ENCODE measurements at regions of chr10 and their contacts with region 1.

Region 1: GRCh38 chr10:93554760-93555432 is 11.6 kb upstream of the FFAR4 start:
- DNase-seq: peak; percentile 84
- H3K4me3 Mint-ChIP-seq: no peak overlapping the region
- H3K27ac Mint-ChIP-seq: no peak overlapping the region
- H3K4me1 Mint-ChIP-seq: peaks cover 5% of the 10 kb centered on the region
- H3K27me3 Mint-ChIP-seq: no peaks in the 10 kb centered on the region
- CTCF ChIP-seq: peak; percentile 76

Region 2: GRCh38 chr10:93180482-93180931 is 374.4 kb before region 1 on chr10:
- CTCF ChIA-PET with region 1: no interaction called
- POLR2A ChIA-PET with region 1: no interaction called
- intact Hi-C with region 1: no loop called
- DNase-seq: no peak
- H3K4me3 Mint-ChIP-seq: no peak overlapping the region
- H3K27ac Mint-ChIP-seq: no peak overlapping the region
- H3K4me1 Mint-ChIP-seq: no peaks in the 10 kb centered on the region
- H3K27me3 Mint-ChIP-seq: no peaks in the 10 kb centered on the region
- CTCF ChIP-seq: no peak

Region 3: GRCh38 chr10:93356516-93356915 is 198.4 kb before region 1 on chr10:
- CTCF ChIA-PET with region 1: no interaction called
- POLR2A ChIA-PET with region 1: no interaction called
- intact Hi-C with region 1: no loop called
- DNase-seq: no peak
- H3K4me3 Mint-ChIP-seq: no peak overlapping the region
- H3K27ac Mint-ChIP-seq: no peak overlapping the region
- H3K4me1 Mint-ChIP-seq: no peaks in the 10 kb centered on the region
- H3K27me3 Mint-ChIP-seq: no peaks in the 10 kb centered on the region
- CTCF ChIP-seq: no peak

Region 4: DNA sequence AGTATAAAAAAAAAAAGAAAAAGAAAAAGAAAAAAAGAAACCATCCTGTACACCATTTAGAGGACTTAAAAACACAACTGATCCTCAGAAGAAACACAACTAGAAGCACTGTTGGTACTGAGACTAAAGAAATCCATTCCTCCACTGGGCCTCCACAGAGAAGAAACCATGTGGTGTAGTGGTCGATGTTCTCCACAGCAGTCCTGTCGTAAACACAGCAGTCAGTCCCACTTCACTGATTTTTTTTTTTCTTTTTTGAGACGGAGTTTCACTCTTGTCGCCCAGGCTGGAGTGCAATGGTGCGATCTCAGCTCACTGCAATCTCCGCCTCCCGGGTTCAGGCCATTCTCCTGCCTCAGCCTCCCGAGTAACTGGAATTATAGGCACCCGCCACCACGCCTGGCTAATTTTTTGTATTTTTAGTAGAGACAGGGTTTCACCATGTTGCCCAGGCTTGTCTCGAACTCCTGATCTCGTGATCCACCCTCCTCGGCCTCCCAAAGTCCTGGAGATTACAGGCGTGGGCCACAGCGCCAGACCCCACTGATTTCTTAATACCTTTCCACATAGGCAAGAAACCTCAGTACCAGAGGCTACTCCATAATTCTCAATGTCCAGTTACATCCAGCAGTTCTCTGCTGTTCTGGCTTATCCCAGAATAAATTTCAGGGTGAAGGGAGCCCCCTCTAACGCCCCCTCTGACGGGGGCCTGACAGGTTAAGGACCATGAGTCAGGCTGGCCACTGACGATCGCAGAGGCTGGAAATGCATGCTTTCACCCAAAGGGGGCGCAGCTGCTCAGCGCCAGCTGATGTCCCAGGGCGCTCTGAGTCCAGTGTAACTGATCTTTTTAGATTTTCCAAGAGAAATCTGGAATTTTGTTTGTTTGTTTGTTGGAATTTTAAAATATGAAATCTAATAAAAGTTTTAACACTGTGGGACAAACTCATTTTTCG is 13.2 kb before region 1 on chr10:
- CTCF ChIA-PET with region 1: interaction called, 19 read pairs
- POLR2A ChIA-PET with region 1: no interaction called
- intact Hi-C with region 1: no loop called
- DNase-seq: peak; percentile 55
- H3K4me3 Mint-ChIP-seq: no peak overlapping the region
- H3K27ac Mint-ChIP-seq: no peak overlapping the region
- H3K4me1 Mint-ChIP-seq: no peaks in the 10 kb centered on the region
- H3K27me3 Mint-ChIP-seq: peaks cover 31% of the 10 kb centered on the region
- CTCF ChIP-seq: peak; percentile 78

Region 5: DNA sequence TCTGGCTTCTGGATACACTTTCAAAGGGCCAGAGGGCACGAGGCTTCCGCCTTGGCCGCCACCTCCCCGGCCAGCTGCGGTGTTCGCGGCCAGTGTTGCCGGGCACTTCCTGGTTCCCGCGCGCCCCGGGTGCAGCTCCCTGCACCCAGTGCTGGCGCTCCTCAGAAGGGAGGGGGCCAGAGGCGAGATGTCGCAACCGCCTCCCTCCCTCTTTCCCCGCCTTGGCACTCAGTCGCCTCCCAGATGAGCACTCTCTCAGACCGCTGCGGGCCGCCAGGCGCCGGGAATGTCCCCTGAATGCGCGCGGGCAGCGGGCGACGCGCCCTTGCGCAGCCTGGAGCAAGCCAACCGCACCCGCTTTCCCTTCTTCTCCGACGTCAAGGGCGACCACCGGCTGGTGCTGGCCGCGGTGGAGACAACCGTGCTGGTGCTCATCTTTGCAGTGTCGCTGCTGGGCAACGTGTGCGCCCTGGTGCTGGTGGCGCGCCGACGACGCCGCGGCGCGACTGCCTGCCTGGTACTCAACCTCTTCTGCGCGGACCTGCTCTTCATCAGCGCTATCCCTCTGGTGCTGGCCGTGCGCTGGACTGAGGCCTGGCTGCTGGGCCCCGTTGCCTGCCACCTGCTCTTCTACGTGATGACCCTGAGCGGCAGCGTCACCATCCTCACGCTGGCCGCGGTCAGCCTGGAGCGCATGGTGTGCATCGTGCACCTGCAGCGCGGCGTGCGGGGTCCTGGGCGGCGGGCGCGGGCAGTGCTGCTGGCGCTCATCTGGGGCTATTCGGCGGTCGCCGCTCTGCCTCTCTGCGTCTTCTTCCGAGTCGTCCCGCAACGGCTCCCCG is 11.8 kb after region 1 on chr10 and contains the start of gene FFAR4:
- CTCF ChIA-PET with region 1: interaction called, 12 read pairs
- POLR2A ChIA-PET with region 1: no interaction called
- intact Hi-C with region 1: no loop called
- DNase-seq: peak; percentile 45
- H3K4me3 Mint-ChIP-seq: peak within 1 kb of the TSS; percentile 59
- H3K27ac Mint-ChIP-seq: no peak within 1 kb of the TSS
- H3K4me1 Mint-ChIP-seq: peaks cover 3% of the 10 kb centered on the region
- H3K27me3 Mint-ChIP-seq: peaks cover 32% of the 10 kb centered on the region
- CTCF ChIP-seq: no peak
- total RNA-seq, gene FFAR4: not detected in 2 replicates

Region 6: DNA sequence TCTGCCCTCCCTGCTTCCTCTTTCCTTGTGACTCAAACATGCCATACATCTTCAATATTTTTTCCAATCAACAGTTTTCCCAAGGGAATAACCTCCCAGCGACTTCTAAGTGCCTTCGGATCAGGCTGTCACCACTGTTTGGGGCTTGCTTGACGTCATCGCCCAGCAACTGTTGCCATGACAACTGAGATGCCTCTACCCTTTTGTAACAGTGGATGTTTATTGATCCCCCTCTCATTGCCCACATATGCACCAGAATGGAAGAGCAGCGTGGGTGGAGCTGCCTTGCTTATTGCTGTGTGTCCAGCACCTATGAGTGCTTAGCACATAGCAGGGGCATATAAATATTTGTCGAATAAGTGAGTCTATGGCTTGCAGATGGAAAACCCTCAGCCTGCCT is 25.9 kb after region 1 on chr10:
- CTCF ChIA-PET with region 1: interaction called, 11 read pairs
- POLR2A ChIA-PET with region 1: no interaction called
- intact Hi-C with region 1: no loop called
- DNase-seq: no peak
- H3K4me3 Mint-ChIP-seq: no peak overlapping the region
- H3K27ac Mint-ChIP-seq: no peak overlapping the region
- H3K4me1 Mint-ChIP-seq: no peaks in the 10 kb centered on the region
- H3K27me3 Mint-ChIP-seq: no peaks in the 10 kb centered on the region
- CTCF ChIP-seq: no peak

Region 7: GRCh38 chr10:93680412-93681047 is 125.6 kb after region 1 on chr10:
- CTCF ChIA-PET with region 1: interaction called, 84 read pairs
- POLR2A ChIA-PET with region 1: no interaction called
- intact Hi-C with region 1: loop called (anchors 1 kb)
- DNase-seq: peak; percentile 55
- H3K4me3 Mint-ChIP-seq: no peak overlapping the region
- H3K27ac Mint-ChIP-seq: no peak overlapping the region
- H3K4me1 Mint-ChIP-seq: no peaks in the 10 kb centered on the region
- H3K27me3 Mint-ChIP-seq: no peaks in the 10 kb centered on the region
- CTCF ChIP-seq: peak; percentile 60

Region 8: DNA sequence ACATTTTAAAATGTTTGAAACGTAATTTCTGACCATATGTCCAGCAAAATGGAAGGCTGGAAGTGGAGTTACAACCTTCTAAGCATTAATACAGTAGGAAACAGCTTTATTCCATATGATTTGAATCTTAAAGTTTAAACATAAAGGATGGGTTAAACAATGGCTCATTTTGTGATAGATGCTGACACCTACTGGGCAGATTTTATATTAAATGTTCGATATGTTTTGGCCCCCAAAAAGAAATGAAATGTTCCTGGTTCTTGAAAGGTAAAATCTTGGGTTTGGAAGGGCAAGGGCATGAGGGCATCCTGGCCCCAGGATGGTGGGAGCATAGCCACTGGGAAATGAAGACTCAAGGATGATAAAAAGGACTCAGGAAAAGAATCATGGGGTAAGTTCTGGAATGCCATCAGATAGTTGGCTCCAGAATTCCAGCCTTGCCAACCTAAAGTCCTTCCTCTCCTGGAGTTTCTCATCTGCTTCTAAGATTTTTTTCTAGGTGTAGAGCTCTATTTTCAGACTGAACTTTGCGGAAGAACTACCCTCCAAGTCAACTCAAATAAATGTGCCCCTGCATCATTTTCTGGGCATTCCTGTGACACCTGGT is 304.3 kb after region 1 on chr10:
- CTCF ChIA-PET with region 1: interaction called, 3 read pairs
- POLR2A ChIA-PET with region 1: no interaction called
- intact Hi-C with region 1: loop called (anchors 2 kb)
- DNase-seq: peak; percentile 26
- H3K4me3 Mint-ChIP-seq: no peak overlapping the region
- H3K27ac Mint-ChIP-seq: no peak overlapping the region
- H3K4me1 Mint-ChIP-seq: no peaks in the 10 kb centered on the region
- H3K27me3 Mint-ChIP-seq: no peaks in the 10 kb centered on the region
- CTCF ChIP-seq: peak; percentile 56

Measured in MCF 10A (cell line).